Left ventricle myocardium inferior (tissue), 1 donor: ENCODE measurements at regions of chr1 and their contacts with region 1.

Region 1: GRCh38 chr1:228734881-228735801 is at the start of gene RHOU:
- DNase-seq: peak; percentile 79
- H3K4me3 ChIP-seq: peak within 1 kb of the TSS; percentile 89
- H3K27ac ChIP-seq: peak within 1 kb of the TSS; percentile 93
- H3K4me1 ChIP-seq: peaks cover 37% of the 10 kb centered on the region
- H3K27me3 ChIP-seq: peaks cover 5% of the 10 kb centered on the region
- CTCF ChIP-seq: peak; percentile 95
- total RNA-seq, gene RHOU: 5.1 TPM

Region 2: GRCh38 chr1:229156872-229157271 is 421.7 kb after region 1 on chr1:
- intact Hi-C with region 1: loop called (anchors 10 kb)
- DNase-seq: no peak
- H3K4me3 ChIP-seq: no peak overlapping the region
- H3K27ac ChIP-seq: no peak overlapping the region
- H3K4me1 ChIP-seq: peaks cover 18% of the 10 kb centered on the region
- H3K27me3 ChIP-seq: no peaks in the 10 kb centered on the region
- CTCF ChIP-seq: peak; percentile 68